Activated CD4-positive, alpha-beta T cell treated with anti-CD3 and anti-CD28 coated beads for 36 hours (primary cell): ENCODE measurements at regions of chr19 and their contacts with region 1.

Region 1: GRCh38 chr19:14395710-14396336 is 14.6 kb downstream of the ADGRE5 start:
- DNase-seq: no peak
- ATAC-seq: peak; percentile 14
- H3K4me3 Mint-ChIP-seq: no peak overlapping the region
- H3K27ac Mint-ChIP-seq: peak overlapping the region; percentile 68
- H3K4me1 Mint-ChIP-seq: peaks cover 36% of the 10 kb centered on the region
- H3K27me3 Mint-ChIP-seq: no peaks in the 10 kb centered on the region

Region 2: DNA sequence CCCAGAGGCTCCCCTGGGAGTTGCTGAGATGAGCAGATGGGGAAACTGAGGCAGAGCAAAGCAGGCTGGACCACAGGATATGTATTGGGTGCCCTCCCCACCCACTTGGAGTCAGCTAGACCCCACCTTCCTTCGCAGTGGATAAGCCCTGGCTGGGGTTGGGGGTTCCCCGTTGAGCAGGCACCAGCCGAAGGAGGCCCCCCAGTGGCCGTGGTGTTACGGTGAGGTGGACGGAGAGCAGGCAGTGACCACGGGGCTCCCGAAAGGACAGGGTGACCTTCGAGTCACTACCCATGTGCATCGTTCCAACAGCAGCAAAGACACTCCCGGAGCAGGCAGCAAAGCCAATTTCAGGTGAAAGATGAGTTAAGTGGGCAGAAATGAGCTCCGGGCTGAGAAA is 77.0 kb before region 1 on chr19:
- CTCF ChIA-PET with region 1: no interaction called
- POLR2A ChIA-PET with region 1: no interaction called
- intact Hi-C with region 1: no loop called
- DNase-seq: peak; percentile 34
- ATAC-seq: no peak
- H3K4me3 Mint-ChIP-seq: no peak overlapping the region
- H3K27ac Mint-ChIP-seq: no peak overlapping the region
- H3K4me1 Mint-ChIP-seq: no peaks in the 10 kb centered on the region
- H3K27me3 Mint-ChIP-seq: no peaks in the 10 kb centered on the region

Region 3: GRCh38 chr19:14450168-14450874 is 54.5 kb after region 1 on chr19:
- CTCF ChIA-PET with region 1: no interaction called
- POLR2A ChIA-PET with region 1: no interaction called
- intact Hi-C with region 1: no loop called
- DNase-seq: peak; percentile 90
- ATAC-seq: peak; percentile 99
- H3K4me3 Mint-ChIP-seq: no peak overlapping the region
- H3K27ac Mint-ChIP-seq: no peak overlapping the region
- H3K4me1 Mint-ChIP-seq: peaks cover 9% of the 10 kb centered on the region
- H3K27me3 Mint-ChIP-seq: no peaks in the 10 kb centered on the region

Region 4: GRCh38 chr19:14769201-14769600 is 373.4 kb after region 1 on chr19:
- CTCF ChIA-PET with region 1: no interaction called
- POLR2A ChIA-PET with region 1: interaction called, 3 read pairs
- intact Hi-C with region 1: loop called in 1 of 2 experiments (anchors 5 kb)
- DNase-seq: no peak
- ATAC-seq: no peak
- H3K4me3 Mint-ChIP-seq: no peak overlapping the region
- H3K27ac Mint-ChIP-seq: no peak overlapping the region
- H3K4me1 Mint-ChIP-seq: no peaks in the 10 kb centered on the region
- H3K27me3 Mint-ChIP-seq: peaks cover 6% of the 10 kb centered on the region